Esophagus muscularis mucosa (tissue), 4 donors: ENCODE measurements at regions of chr4 and their contacts with region 1.

Region 1: GRCh38 chr4:183175631-183176232 is 76.7 kb downstream of the WWC2 start:
- DNase-seq: no peak
- H3K4me3 ChIP-seq: no peak overlapping the region
- H3K27ac ChIP-seq: no peak overlapping the region
- H3K4me1 ChIP-seq: peaks cover 25 to 47% (median 38%) of the 10 kb centered on the region in 4 donors
- H3K27me3 ChIP-seq: no peaks in the 10 kb centered on the region
- CTCF ChIP-seq: no peak
- EP300 ChIP-seq: no peak
- POLR2A ChIP-seq: no peak

Region 2: GRCh38 chr4:183099537-183100297 is 76.0 kb before region 1 on chr4:
- intact Hi-C with region 1: loop called (anchors 10 kb)
- DNase-seq: no peak
- H3K4me3 ChIP-seq: peak overlapping the region; percentile 72 to 93 (median 78)
- H3K27ac ChIP-seq: peak overlapping the region; percentile 89 to 99 (median 98)
- H3K4me1 ChIP-seq: peaks cover 20 to 40% (median 36%) of the 10 kb centered on the region in 4 donors
- H3K27me3 ChIP-seq: no peaks in the 10 kb centered on the region
- CTCF ChIP-seq: no peak
- EP300 ChIP-seq: no peak
- POLR2A ChIP-seq: no peak